ENCODE measurements at regions of chr12 and their contacts with region 1.

Region 1: DNA sequence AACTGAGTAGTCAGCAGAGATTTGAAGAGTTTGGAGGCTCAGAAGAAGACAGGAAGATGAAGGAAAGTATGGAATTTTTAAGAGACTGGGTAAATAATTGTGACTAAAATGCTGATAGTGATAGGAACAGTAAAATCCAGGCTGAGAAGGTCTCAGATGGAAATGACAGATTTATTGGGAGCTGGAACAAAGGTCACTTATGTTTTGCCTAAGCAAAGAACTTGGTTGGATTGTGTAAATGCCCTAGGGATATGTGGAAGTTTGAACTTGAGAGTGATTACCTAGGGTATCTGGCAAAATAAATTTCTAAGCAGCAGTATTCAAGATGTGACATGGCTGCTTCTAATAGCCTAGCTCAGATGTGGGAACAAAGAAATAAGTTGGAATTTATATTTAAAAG is 180.9 kb downstream of the TRHDE start:
- DNase-seq: no peak
- ATAC-seq: no peak
- H3K4me3 ChIP-seq: no peak overlapping the region
- H3K27ac ChIP-seq: no peak overlapping the region
- H3K4me1 ChIP-seq: no peaks in the 10 kb centered on the region
- H3K27me3 ChIP-seq: no peaks in the 10 kb centered on the region

Region 2: GRCh38 chr12:72282721-72283120 is 170.3 kb before region 1 on chr12:
- intact Hi-C with region 1: no loop called
- DNase-seq: no peak
- ATAC-seq: no peak
- H3K4me3 ChIP-seq: no peak overlapping the region
- H3K27ac ChIP-seq: no peak overlapping the region
- H3K4me1 ChIP-seq: no peaks in the 10 kb centered on the region
- H3K27me3 ChIP-seq: no peaks in the 10 kb centered on the region

Region 3: GRCh38 chr12:72493407-72493806 is 40.3 kb after region 1 on chr12:
- intact Hi-C with region 1: no loop called
- DNase-seq: no peak
- ATAC-seq: no peak
- H3K4me3 ChIP-seq: no peak overlapping the region
- H3K27ac ChIP-seq: no peak overlapping the region
- H3K4me1 ChIP-seq: no peaks in the 10 kb centered on the region
- H3K27me3 ChIP-seq: no peaks in the 10 kb centered on the region

Region 4: DNA sequence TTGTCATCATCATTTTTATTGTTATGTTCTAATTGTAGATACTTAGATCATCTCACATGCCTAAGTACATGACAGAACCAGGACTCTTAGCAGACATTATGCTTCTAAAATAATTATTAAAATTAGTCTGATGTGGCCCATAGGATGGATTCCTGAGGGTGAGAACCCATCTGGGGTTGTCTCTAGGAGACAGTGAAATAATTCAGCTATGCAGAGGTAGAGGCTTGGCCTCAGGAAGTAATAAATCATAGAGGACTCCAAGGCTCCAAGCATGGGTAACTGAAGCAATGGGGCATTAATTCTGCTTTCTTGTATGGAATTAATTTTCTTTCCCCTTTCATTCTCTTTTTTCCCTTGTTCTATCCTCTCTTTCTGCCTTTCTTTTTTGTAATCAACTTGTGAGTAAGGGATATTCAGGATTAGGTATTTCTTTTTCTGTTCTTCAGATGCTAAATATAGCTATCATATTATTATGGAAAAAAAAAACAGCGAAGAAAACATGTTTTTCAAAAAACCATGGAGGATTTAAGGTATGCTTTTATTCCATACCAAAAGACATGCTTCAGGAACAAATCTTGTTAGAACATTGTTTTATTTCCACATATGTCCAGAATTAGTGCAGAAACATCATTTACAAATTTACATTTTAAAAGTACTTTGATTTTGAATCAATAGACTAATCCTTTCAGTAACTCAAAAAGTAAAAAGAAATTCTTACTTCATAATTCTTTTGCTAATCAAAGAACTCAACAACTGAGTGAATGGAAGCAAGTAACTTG is 82.3 kb after region 1 on chr12:
- intact Hi-C with region 1: loop called in 1 of 2 experiments (anchors 10 kb)
- DNase-seq: no peak
- ATAC-seq: no peak
- H3K4me3 ChIP-seq: no peak overlapping the region
- H3K27ac ChIP-seq: no peak overlapping the region
- H3K4me1 ChIP-seq: no peaks in the 10 kb centered on the region
- H3K27me3 ChIP-seq: no peaks in the 10 kb centered on the region

Region 5: DNA sequence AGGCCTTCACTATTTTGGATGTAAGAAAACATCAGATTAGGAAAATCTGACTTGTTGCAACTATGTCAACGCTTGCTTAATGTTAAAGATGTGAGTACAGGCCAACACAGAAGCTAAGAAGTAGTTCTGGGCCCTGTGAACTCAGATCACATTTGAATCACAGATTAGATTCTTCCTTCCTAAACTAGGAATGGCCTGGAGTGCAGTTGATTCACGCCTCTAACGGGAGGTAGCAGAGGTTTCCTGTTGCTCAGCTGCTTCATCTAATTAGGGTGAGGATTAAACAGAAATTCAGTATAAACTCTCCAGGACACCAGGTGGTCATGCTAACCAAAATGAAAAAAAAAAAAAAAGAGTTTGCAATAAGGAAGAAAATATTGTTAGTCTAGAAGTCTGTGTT is 133.4 kb after region 1 on chr12:
- intact Hi-C with region 1: no loop called
- DNase-seq: no peak
- ATAC-seq: no peak
- H3K4me3 ChIP-seq: no peak overlapping the region
- H3K27ac ChIP-seq: no peak overlapping the region
- H3K4me1 ChIP-seq: no peaks in the 10 kb centered on the region
- H3K27me3 ChIP-seq: no peaks in the 10 kb centered on the region